ENCODE measurements at regions of chr10 and their contacts with region 1.

Region 1: DNA sequence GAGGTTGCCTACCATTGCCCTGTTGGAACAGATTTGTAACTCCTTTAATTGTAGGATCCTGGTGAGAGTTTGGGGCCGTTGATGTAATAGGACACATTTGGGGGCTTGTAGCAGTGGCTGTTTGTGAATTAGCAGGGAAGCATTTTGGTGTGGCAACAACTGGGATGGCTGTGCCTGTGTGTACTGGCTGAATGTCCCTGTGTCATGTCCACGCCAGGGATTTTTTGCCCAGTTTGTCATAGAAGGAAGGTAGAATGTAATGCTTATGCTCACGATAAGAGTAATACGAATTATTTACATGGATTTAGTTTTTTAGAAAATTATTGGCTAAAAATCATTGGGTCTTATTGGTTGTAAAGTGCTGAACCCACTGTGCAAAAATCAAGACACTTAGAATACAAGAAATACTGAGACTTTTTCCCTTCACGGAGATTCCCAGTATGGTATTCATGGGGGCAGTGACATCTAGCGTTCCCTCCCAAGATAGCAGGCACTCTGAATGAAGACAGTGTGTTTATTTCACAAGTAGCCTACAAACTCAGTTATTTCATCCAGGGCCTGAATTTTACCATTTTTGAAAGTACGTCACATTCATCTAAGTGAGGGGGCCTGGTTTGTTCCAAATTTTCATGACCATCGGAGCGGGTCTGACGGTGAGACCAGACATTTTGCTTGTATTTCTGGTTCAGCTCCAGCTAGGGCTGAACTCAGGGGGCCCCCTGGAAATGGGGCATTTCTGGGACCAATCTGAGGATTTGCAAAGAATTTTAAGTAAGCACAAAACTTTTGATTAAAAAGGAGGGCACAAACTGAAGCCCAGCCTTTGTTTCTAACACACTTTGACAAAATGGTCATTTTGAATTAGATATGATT is 74.7 kb downstream of the CACNB2 start:
- DNase-seq: no peak
- ATAC-seq: peak; percentile 87
- H3K4me3 ChIP-seq: no peak overlapping the region
- H3K27ac ChIP-seq: no peak overlapping the region
- H3K4me1 ChIP-seq: no peaks in the 10 kb centered on the region
- H3K27me3 ChIP-seq: no peaks in the 10 kb centered on the region

Region 2: GRCh38 chr10:17847585-17848296 is 367.2 kb before region 1 on chr10:
- intact Hi-C with region 1: loop called (anchors 5 kb)
- DNase-seq: no peak
- ATAC-seq: peak; percentile 38
- H3K4me3 ChIP-seq: no peak overlapping the region
- H3K27ac ChIP-seq: no peak overlapping the region
- H3K4me1 ChIP-seq: no peaks in the 10 kb centered on the region
- H3K27me3 ChIP-seq: no peaks in the 10 kb centered on the region

Region 3: GRCh38 chr10:17910125-17910789 is 304.7 kb before region 1 on chr10:
- intact Hi-C with region 1: loop called (anchors 2 to 5 kb)
- DNase-seq: no peak
- ATAC-seq: no peak
- H3K4me3 ChIP-seq: no peak overlapping the region
- H3K27ac ChIP-seq: no peak overlapping the region
- H3K4me1 ChIP-seq: no peaks in the 10 kb centered on the region
- H3K27me3 ChIP-seq: no peaks in the 10 kb centered on the region

Region 4: GRCh38 chr10:18104223-18104872 is 110.6 kb before region 1 on chr10:
- intact Hi-C with region 1: loop called in 1 of 2 experiments (anchors 5 kb)
- DNase-seq: peak; percentile 69 to 87
- ATAC-seq: no peak
- H3K4me3 ChIP-seq: peak overlapping the region in 1 of 2 donors; percentile 54
- H3K27ac ChIP-seq: no peak overlapping the region
- H3K4me1 ChIP-seq: no peaks in the 10 kb centered on the region
- H3K27me3 ChIP-seq: no peaks in the 10 kb centered on the region

Region 5: GRCh38 chr10:18140149-18140956 is 74.6 kb before region 1 on chr10 and contains the start of gene CACNB2:
- intact Hi-C with region 1: loop called in 1 of 2 experiments (anchors 5 kb)
- DNase-seq: peak; percentile 80 to 94
- ATAC-seq: peak; percentile 89
- H3K4me3 ChIP-seq: peak within 1 kb of the TSS; percentile 73 to 83
- H3K27ac ChIP-seq: peak within 1 kb of the TSS; percentile 59 to 81
- H3K4me1 ChIP-seq: peaks cover 0 to 3% of the 10 kb centered on the region in 2 donors
- H3K27me3 ChIP-seq: no peaks in the 10 kb centered on the region
- total RNA-seq, gene CACNB2: 7.6 to 14.6 TPM

Region 6: DNA sequence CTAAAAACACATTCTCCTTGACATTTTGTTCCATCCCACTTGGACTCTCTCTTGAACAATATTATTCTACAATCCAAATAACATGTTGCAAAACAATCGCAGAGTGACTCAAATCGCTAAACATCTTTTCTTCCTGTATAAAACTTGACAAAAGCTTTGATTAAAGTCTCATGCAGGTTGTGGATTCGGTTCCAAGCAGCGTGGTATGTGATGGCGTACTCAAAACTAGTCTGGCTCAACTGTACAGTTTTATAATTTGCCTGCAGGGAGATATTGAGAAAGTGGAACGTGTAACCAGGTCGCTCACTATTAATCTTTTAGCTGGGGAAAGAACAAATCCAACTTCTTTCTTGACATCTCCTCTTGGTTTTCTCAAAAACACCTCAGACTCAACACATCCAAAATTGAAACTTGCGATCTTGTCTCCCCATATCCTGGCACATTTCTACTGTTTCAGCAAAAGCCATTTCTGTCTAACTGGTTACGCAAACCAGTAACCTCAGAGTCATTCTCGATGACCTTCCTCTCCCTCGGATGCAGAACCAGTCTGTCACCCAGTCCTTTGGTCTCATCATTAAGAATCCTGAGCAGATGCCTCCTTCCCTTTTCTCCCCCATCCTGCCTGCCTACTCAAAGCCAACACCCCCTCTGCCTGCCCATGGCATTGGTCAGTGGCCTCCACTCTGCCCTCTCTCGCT is 25.4 kb after region 1 on chr10:
- intact Hi-C with region 1: no loop called
- DNase-seq: no peak
- ATAC-seq: no peak
- H3K4me3 ChIP-seq: no peak overlapping the region
- H3K27ac ChIP-seq: peak overlapping the region; percentile 39
- H3K4me1 ChIP-seq: peaks cover 4 to 6% of the 10 kb centered on the region in 2 donors
- H3K27me3 ChIP-seq: no peaks in the 10 kb centered on the region

Measured in aorta (tissue), 5 donors.